Dendritic cell treated with granulocyte-macrophage colony-stimulating factor and Interleukin-4, amounts not matched to agents 40 ng/mL and 50 ng/mL, for 4 days (primary cell): ENCODE measurements at regions of chr6 and their contacts with region 1.

Region 1: GRCh38 chr6:24774696-24775519 is at the start of gene GMNN:
- H3K4me3 Mint-ChIP-seq: peak within 1 kb of the TSS; percentile 99
- H3K27ac Mint-ChIP-seq: peak within 1 kb of the TSS; percentile 95
- H3K4me1 Mint-ChIP-seq: peaks cover 26% of the 10 kb centered on the region
- H3K27me3 Mint-ChIP-seq: no peaks in the 10 kb centered on the region

Region 2: DNA sequence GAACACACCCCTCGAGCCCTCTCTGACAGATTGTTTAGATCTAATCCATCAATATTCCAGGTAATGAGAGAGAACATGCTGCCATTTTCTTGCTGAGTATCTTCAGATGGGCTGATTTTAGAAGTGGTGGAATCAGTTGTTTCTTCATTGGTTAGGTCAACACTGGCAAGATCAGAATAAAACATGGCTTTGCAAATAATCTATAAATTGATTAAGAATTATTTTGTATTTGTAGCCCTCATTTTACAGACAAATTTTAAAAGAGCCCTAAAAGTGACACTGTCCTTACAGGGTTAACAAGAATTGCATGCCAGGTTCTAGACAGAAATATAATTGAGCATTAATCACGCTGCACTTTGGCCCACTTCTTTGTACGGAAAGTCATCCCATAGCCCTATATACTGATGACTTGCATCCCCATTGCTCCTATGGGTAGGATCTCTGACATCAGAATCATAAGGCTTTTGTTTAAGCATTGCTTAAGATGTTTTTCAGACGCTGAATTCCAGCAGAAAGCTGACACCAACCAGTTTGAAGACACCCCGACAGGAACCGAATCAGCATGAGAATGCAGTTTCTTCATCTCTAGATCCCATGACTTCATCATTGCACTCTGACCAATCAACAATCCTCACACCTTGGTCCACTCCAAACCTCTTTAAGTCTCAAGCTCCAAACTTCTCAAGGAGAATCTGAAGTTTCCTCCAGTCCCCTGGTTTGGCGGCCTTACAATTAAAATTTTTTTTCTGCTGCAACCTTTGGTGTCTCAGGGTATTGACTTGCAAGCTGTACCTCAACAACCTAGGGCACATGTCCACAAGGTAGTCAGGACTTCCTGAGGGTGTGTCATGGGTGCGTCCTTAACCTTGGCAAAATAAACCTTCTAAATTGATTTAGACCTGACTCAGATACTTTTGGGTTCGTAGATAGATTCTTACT is 116.1 kb before region 1 on chr6:
- intact Hi-C with region 1: loop called (anchors 5 kb)
- H3K4me3 Mint-ChIP-seq: no peak overlapping the region
- H3K27ac Mint-ChIP-seq: peak overlapping the region; percentile 83
- H3K4me1 Mint-ChIP-seq: peaks cover 47% of the 10 kb centered on the region
- H3K27me3 Mint-ChIP-seq: no peaks in the 10 kb centered on the region

Region 3: GRCh38 chr6:24699521-24700359 is 75.2 kb before region 1 on chr6:
- intact Hi-C with region 1: no loop called
- H3K4me3 Mint-ChIP-seq: no peak overlapping the region
- H3K27ac Mint-ChIP-seq: no peak overlapping the region
- H3K4me1 Mint-ChIP-seq: peaks cover 12% of the 10 kb centered on the region
- H3K27me3 Mint-ChIP-seq: no peaks in the 10 kb centered on the region

Region 4: DNA sequence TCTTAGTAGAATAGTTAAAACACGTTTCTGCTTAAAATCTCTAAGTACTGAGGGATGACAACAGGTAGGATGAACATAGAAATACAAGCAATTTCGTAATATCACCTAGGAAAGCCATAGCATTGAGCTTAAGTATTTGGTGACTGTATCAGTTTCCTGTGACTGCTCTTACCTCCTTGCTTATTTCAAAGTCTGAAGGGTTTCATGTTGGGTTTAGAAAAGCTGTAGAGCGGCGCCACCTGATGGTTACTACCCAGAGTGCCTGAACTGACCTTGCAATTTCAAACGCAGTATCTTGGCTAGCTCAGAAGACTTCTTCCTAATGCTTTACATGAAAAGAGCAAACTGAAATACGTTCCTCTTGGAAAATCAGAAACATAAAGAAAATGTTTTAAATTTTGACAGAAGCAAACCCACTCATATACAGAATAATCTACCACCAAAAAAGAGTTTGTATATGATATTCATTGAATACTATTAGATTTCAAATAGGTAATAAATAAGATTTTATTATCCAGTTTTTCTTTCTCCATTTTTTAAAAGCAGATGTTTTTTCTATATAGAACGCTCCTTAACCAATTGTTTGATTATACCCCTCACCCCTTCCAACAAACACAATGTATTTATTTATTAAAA is 243.1 kb after region 1 on chr6:
- intact Hi-C with region 1: loop called (anchors 5 kb)
- H3K4me3 Mint-ChIP-seq: no peak overlapping the region
- H3K27ac Mint-ChIP-seq: no peak overlapping the region
- H3K4me1 Mint-ChIP-seq: peaks cover 34% of the 10 kb centered on the region
- H3K27me3 Mint-ChIP-seq: peaks cover 2% of the 10 kb centered on the region